CD8-positive, alpha-beta T cell (primary cell): ENCODE measurements at regions of chr17 and their contacts with region 1.

Region 1: DNA sequence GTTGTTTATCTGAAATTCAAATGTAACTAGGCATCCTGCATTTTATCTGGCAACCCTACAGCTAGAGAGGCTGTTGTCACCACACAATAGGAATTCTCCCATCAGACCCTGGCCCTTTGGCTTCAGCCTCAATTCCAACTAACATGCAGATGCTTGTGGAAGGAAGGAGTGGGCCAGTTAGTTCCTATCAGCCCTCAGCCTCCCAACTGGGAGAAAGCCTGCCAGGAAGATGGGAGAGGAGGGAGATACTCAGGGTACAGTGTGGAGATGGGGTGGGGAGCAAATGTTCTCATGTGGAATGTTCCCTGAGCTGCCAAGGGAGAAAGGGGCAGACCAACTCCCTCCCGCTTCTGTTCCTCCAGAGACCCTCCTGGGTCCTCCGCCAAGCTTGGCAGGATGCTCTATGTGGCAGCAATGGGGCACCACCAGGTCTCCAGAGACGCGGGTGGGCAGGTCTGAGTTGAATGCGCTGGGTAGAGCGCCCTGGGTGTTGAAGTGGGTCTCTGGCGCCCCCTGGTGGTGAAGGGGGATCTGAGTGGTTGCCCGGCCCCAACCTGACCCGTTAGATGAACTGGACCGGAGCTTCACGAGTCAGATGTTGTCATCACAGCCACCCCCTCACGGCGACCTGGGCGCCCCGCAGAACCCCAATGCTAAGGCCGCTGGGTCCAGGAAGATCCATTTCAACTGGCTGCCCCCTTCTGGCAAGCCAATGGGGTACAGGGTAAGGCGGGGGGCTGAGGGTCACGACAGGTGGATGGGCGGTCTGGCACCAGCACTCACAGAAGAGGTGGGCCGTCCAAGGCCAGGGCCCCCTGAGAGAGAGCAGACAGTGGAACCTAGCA is 15.2 kb downstream of the GALK1 start:
- DNase-seq: peak; percentile 77 to 95 (median 87)
- ATAC-seq: peak; percentile 64
- H3K4me3 ChIP-seq: no peak overlapping the region
- H3K4me3 Mint-ChIP-seq: no peak overlapping the region
- H3K27ac ChIP-seq: no peak overlapping the region
- H3K27ac Mint-ChIP-seq: no peak overlapping the region
- H3K4me1 ChIP-seq: peaks cover 23% of the 10 kb centered on the region
- H3K4me1 Mint-ChIP-seq: peaks cover 19% of the 10 kb centered on the region
- H3K27me3 ChIP-seq: no peaks in the 10 kb centered on the region
- H3K27me3 Mint-ChIP-seq: peaks cover 2% of the 10 kb centered on the region
- CTCF ChIP-seq: peak; percentile 90

Region 2: DNA sequence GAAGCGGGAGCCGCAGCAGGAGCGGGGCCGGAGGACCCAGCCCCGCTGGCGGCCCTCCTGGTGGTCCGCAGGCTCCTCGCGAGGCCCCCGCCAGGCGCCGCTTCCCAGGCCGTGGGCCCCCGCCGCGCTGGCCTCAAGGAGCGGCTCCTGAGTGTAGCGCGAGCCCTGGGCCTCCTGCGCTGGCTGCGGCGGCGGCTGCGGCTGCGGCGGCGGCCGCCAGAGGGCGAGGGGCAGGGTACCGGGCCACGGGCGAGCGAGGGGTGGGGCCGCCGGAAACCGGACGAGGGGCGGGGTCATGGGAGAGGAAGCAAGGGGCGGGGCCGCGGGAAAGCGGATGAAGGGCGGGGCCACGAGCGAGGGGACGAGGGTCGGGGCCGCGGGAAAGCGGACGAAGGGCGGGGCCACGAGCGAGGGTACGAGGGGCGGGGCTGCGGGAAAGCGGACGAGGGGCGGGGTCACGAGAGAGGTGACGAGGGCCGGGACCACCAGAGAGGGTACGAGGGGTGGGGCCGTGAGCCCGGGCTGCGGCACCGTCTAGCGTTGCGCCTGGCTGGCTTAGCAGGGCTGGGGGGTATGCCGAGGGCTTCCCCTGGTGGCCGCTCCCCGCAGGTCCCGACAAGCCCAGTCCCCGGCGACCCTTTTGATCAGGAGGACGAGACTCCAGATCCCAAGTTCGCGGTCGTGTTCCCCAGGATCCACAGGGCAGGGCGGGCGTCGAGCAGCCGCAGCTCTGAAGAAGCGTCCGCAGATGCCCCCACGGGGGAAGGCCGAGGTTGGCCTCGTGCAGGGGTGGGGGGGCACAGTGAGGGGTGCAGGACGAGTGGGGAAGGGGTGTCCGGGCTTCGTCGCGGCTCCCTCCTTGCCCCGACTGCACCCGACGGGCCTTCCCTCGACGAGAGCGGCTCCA is 160.5 kb before region 1 on chr17:
- CTCF ChIA-PET with region 1: interaction called, 8 read pairs
- POLR2A ChIA-PET with region 1: no interaction called
- intact Hi-C with region 1: loop called in 1 of 2 experiments (anchors 2 kb)
- DNase-seq: peak; percentile 90 to 99 (median 95)
- ATAC-seq: peak; percentile 85
- H3K4me3 ChIP-seq: peak overlapping the region; percentile 59 to 74
- H3K4me3 Mint-ChIP-seq: peak overlapping the region; percentile 77
- H3K27ac ChIP-seq: peak overlapping the region; percentile 48 to 52
- H3K27ac Mint-ChIP-seq: peak overlapping the region; percentile 70
- H3K4me1 ChIP-seq: peaks cover 15% of the 10 kb centered on the region
- H3K4me1 Mint-ChIP-seq: peaks cover 15% of the 10 kb centered on the region
- H3K27me3 ChIP-seq: no peaks in the 10 kb centered on the region
- H3K27me3 Mint-ChIP-seq: no peaks in the 10 kb centered on the region
- CTCF ChIP-seq: peak; percentile 61

Region 3: GRCh38 chr17:75667021-75667790 is 82.6 kb before region 1 on chr17 and contains the starts of genes RECQL5 and SAP30BP:
- CTCF ChIA-PET with region 1: interaction called, 145 read pairs
- POLR2A ChIA-PET with region 1: interaction called, 3 read pairs
- intact Hi-C with region 1: no loop called
- DNase-seq: peak; percentile 95 to 99 (median 98)
- ATAC-seq: peak; percentile 100
- H3K4me3 ChIP-seq: peak within 1 kb of the TSS; percentile 78 to 85
- H3K4me3 Mint-ChIP-seq: peak within 1 kb of the TSS; percentile 58
- H3K27ac ChIP-seq: peak within 1 kb of the TSS; percentile 88 to 96
- H3K27ac Mint-ChIP-seq: no peak within 1 kb of the TSS
- H3K4me1 ChIP-seq: peaks cover 18% of the 10 kb centered on the region
- H3K4me1 Mint-ChIP-seq: peaks cover 33% of the 10 kb centered on the region
- H3K27me3 ChIP-seq: no peaks in the 10 kb centered on the region
- H3K27me3 Mint-ChIP-seq: no peaks in the 10 kb centered on the region
- CTCF ChIP-seq: no peak
- total RNA-seq, gene RECQL5: 11.2 to 13.2 TPM
- total RNA-seq, gene SAP30BP: 303 to 305 TPM

Region 4: GRCh38 chr17:75731716-75732498 is 17.9 kb before region 1 on chr17:
- CTCF ChIA-PET with region 1: interaction called, 58 read pairs
- POLR2A ChIA-PET with region 1: interaction called, 3 read pairs
- intact Hi-C with region 1: no loop called
- DNase-seq: no peak
- ATAC-seq: no peak
- H3K4me3 ChIP-seq: no peak overlapping the region
- H3K4me3 Mint-ChIP-seq: no peak overlapping the region
- H3K27ac ChIP-seq: no peak overlapping the region
- H3K27ac Mint-ChIP-seq: no peak overlapping the region
- H3K4me1 ChIP-seq: no peaks in the 10 kb centered on the region
- H3K4me1 Mint-ChIP-seq: peaks cover 3% of the 10 kb centered on the region
- H3K27me3 ChIP-seq: no peaks in the 10 kb centered on the region
- H3K27me3 Mint-ChIP-seq: no peaks in the 10 kb centered on the region
- CTCF ChIP-seq: no peak

Region 5: DNA sequence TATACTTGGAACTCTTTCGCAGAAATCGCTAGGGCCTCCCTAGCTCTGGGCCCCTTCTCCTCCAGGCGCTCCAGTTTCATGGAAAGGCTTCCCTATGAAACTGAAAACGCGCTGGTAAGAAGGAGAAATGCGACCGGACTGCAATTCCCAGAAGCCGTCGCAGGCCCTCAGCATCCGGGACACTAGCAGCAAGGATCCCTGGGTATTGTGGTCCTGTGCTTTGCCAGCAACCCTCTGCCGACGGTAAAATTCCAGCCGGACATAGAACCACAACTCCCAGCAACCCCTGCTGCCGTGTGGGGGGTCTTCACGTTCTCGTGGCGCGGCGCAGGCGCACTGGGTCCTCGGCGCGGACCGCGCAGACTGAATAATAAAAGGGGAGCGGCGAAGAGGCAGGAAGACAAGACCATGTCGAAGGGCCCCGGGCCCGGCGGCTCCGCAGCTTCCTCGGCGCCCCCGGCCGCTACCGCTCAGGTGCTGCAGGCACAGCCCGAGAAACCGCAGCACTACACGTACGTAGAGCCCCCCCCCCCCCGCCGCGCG is 34.8 kb after region 1 on chr17 and contains the start of gene UNK:
- CTCF ChIA-PET with region 1: interaction called, 12 read pairs
- POLR2A ChIA-PET with region 1: interaction called, 60 read pairs
- intact Hi-C with region 1: loop called in 1 of 2 experiments (anchors 5 kb)
- DNase-seq: peak; percentile 91 to 99 (median 96)
- ATAC-seq: peak; percentile 64
- H3K4me3 ChIP-seq: peak within 1 kb of the TSS; percentile 57 to 78
- H3K4me3 Mint-ChIP-seq: peak within 1 kb of the TSS; percentile 93
- H3K27ac ChIP-seq: peak within 1 kb of the TSS; percentile 95 to 100
- H3K27ac Mint-ChIP-seq: peak within 1 kb of the TSS; percentile 98
- H3K4me1 ChIP-seq: peaks cover 39% of the 10 kb centered on the region
- H3K4me1 Mint-ChIP-seq: peaks cover 49% of the 10 kb centered on the region
- H3K27me3 ChIP-seq: no peaks in the 10 kb centered on the region
- H3K27me3 Mint-ChIP-seq: no peaks in the 10 kb centered on the region
- CTCF ChIP-seq: no peak
- total RNA-seq, gene UNK: 37.3 to 42.8 TPM

Region 6: GRCh38 chr17:75855310-75856081 is 105.7 kb after region 1 on chr17 and contains the start of gene WBP2:
- CTCF ChIA-PET with region 1: interaction called, 27 read pairs
- POLR2A ChIA-PET with region 1: interaction called, 14 read pairs
- intact Hi-C with region 1: no loop called
- DNase-seq: peak; percentile 93 to 100 (median 96)
- ATAC-seq: peak; percentile 90
- H3K4me3 ChIP-seq: peak within 1 kb of the TSS; percentile 79 to 83
- H3K4me3 Mint-ChIP-seq: no peak within 1 kb of the TSS
- H3K27ac ChIP-seq: peak within 1 kb of the TSS; percentile 84 to 94
- H3K27ac Mint-ChIP-seq: peak within 1 kb of the TSS; percentile 94
- H3K4me1 ChIP-seq: peaks cover 19% of the 10 kb centered on the region
- H3K4me1 Mint-ChIP-seq: peaks cover 29% of the 10 kb centered on the region
- H3K27me3 ChIP-seq: no peaks in the 10 kb centered on the region
- H3K27me3 Mint-ChIP-seq: no peaks in the 10 kb centered on the region
- CTCF ChIP-seq: peak; percentile 27
- total RNA-seq, gene WBP2: 69.1 to 80.2 TPM

Region 7: DNA sequence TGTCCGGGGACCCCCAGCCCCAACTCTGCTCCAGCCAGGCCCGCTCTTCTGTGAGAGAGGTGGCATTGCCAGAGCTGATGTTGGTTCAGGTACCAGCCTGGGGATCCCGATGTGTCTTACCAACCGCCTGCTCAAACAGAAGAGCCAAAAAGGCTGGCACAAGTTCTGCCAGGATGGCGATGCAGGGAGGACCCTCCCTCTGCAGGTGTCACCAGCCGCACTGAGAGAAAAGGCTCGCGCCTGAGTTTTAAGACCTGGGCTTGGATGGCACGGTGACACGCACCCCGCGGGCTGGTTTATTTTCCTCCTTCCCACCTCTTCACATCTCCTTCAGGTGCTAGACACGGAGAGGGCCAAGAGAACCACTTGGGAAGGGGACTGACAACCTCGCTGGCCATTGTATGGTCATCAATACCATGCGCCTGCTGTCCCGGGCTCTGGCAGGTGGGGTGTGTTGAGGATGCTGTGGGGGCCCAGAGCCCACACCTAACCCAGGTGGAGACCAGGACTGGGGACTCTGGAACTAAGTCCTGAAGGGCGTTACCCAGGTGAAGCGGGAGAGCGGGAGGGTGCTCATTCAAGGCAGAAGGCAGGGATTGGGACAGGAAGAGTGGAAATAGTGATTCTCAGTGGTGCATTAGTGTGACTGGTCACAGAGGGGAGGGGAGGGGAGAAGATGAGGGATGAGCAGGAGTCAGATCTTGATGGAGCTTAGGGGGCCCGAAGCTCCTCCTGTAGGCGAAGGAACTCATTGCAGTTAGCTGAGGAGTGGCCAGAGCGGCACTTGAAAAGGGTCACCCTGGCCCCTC is 375.0 kb after region 1 on chr17:
- CTCF ChIA-PET with region 1: no interaction called
- POLR2A ChIA-PET with region 1: no interaction called
- intact Hi-C with region 1: no loop called
- DNase-seq: no peak
- ATAC-seq: no peak
- H3K4me3 ChIP-seq: no peak overlapping the region
- H3K4me3 Mint-ChIP-seq: no peak overlapping the region
- H3K27ac ChIP-seq: no peak overlapping the region
- H3K27ac Mint-ChIP-seq: no peak overlapping the region
- H3K4me1 ChIP-seq: peaks cover 38% of the 10 kb centered on the region
- H3K4me1 Mint-ChIP-seq: peaks cover 24% of the 10 kb centered on the region
- H3K27me3 ChIP-seq: no peaks in the 10 kb centered on the region
- H3K27me3 Mint-ChIP-seq: no peaks in the 10 kb centered on the region
- CTCF ChIP-seq: no peak